Calu3 (cell line): ENCODE measurements at regions of chr3 and their contacts with region 1.

Region 1: DNA sequence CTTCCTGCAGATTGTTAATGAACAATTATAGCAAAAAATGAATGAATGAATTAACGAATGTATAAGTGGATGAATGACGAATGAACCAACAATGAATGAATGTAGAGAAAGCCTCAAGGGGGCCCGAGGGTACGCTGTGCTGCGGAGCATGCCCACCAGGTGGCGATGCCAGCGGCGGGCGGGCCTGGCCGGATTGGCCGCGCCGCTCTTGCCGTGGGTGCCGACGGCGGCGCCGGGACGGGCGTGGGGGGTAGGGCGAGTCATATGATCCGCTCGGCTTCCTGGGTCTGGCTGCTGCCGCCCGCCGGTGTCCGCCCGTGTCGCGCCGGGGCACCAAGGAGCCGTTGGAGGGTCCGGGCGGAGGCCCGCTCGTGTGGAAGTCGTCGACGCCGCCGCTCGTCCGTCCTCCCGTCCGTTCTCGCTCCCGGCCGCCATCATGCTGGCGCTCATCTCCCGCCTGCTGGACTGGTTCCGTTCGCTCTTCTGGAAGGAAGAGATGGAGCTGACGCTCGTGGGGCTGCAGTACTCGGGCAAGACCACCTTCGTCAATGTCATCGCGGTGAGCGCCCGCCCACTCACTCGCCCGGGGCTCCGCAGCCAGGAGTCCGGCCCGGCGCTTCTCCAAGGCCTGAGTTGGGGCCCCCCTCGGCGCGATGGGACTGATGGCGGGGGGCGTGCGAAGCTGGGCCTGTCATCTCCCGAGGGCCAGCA is at the start of gene ARL8B:
- DNase-seq: peak; percentile 94
- H3K4me3 Mint-ChIP-seq: peak within 1 kb of the TSS; percentile 95
- H3K27ac Mint-ChIP-seq: peak within 1 kb of the TSS; percentile 73
- H3K4me1 Mint-ChIP-seq: peaks cover 8% of the 10 kb centered on the region
- H3K27me3 Mint-ChIP-seq: no peaks in the 10 kb centered on the region
- CTCF ChIP-seq: peak; percentile 81
- total RNA-seq, gene ARL8B: 44.2 and 47.0 TPM in 2 replicates

Region 2: DNA sequence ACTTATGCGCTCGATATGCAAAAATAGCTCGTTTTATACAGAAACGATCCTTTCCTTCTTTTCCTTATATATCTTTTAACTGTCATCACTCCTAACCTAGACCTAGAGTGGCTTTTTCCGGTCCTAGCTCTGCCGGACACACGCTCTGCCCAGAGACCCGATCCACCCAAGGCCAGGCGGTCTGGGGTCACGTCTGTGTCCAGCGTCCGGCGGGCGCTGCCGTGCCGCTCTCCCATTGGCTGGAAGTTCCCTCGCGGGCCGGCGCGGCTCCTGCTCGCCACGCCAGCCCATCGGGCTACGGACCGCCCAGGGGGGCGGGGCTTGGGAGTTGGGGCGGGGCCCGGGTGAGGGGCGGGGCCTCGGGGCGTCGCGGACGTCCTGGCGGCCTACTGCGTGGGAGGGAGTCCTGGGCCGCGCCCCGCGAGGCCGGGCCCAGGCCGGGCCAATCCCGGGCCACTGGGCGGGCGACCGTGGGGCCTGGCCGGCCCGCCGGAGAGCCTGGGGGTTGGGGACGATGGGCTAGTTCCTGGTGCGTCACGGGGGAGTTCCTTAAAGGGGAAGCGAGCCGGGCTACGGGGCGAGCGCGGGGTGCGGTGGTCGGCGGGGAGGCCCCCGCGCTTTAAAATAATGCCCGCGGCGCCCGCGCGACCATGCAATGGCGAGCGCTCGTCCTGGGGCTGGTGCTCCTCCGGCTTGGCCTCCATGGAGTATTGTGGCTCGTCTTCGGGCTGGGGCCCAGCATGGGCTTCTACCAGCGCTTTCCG is 65.2 kb after region 1 on chr3 and contains the start of gene EDEM1:
- CTCF ChIA-PET with region 1: no interaction called
- intact Hi-C with region 1: loop called (anchors 2 kb)
- DNase-seq: peak; percentile 98
- H3K4me3 Mint-ChIP-seq: peak within 1 kb of the TSS; percentile 74
- H3K27ac Mint-ChIP-seq: peak within 1 kb of the TSS; percentile 89
- H3K4me1 Mint-ChIP-seq: peaks cover 17% of the 10 kb centered on the region
- H3K27me3 Mint-ChIP-seq: no peaks in the 10 kb centered on the region
- CTCF ChIP-seq: no peak
- total RNA-seq, gene EDEM1: 52.7 and 65.9 TPM in 2 replicates